ENCODE measurements at regions of chr20 and their contacts with region 1.

Region 1: GRCh38 chr20:815914-816606 is 17.5 kb upstream of the FAM110A start:
- DNase-seq: peak; percentile 61
- H3K4me3 ChIP-seq: no peak overlapping the region
- H3K27ac ChIP-seq: no peak overlapping the region
- H3K4me1 ChIP-seq: no peaks in the 10 kb centered on the region
- H3K27me3 ChIP-seq: peaks cover 8% of the 10 kb centered on the region; the same call in 1 of the 2 replicates

Region 2: DNA sequence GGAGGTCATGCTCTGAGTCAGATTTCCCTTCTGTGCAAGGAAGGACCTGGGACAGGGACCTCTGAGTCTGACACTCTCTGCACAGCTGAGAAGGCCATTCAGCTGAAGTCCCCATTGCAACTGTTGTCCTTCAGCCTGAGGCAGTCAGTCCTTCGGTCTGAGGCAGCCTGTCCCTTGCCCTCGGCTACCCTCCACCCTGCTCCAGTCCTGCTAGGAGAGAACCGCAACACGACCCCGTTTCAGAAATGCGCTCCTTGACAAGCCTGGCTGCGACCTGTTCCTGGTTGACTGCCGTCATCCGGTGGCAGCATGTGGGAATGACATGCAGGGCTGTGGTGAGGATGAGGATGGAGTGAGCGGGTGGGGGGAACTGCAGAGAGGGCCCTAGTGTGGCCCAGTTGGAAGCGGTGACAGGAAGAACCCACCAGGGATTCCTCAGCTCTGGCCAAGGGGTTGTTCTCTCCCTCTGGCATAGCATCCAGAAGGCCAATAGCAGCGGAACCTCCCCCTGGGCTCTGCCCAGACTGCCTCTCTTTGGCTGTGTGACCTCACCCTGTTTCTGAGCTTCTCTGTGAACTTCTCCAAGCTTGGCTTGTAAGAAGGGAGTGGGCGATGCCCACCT is 140.4 kb after region 1 on chr20:
- in situ Hi-C with region 1: loop called (anchors 5 kb)
- DNase-seq: peak; percentile 57
- H3K4me3 ChIP-seq: no peak overlapping the region
- H3K27ac ChIP-seq: no peak overlapping the region
- H3K4me1 ChIP-seq: no peaks in the 10 kb centered on the region
- H3K27me3 ChIP-seq: 0 out of 2 replicates have a peak, but pooled peaks cover 12% of the 10 kb centered on the region

Region 3: GRCh38 chr20:1103751-1104150 is 287.7 kb after region 1 on chr20:
- in situ Hi-C with region 1: loop called (anchors 5 kb)
- DNase-seq: no peak
- H3K4me3 ChIP-seq: no peak overlapping the region
- H3K27ac ChIP-seq: no peak overlapping the region
- H3K4me1 ChIP-seq: no peaks in the 10 kb centered on the region
- H3K27me3 ChIP-seq: no peaks in the 10 kb centered on the region

Region 4: DNA sequence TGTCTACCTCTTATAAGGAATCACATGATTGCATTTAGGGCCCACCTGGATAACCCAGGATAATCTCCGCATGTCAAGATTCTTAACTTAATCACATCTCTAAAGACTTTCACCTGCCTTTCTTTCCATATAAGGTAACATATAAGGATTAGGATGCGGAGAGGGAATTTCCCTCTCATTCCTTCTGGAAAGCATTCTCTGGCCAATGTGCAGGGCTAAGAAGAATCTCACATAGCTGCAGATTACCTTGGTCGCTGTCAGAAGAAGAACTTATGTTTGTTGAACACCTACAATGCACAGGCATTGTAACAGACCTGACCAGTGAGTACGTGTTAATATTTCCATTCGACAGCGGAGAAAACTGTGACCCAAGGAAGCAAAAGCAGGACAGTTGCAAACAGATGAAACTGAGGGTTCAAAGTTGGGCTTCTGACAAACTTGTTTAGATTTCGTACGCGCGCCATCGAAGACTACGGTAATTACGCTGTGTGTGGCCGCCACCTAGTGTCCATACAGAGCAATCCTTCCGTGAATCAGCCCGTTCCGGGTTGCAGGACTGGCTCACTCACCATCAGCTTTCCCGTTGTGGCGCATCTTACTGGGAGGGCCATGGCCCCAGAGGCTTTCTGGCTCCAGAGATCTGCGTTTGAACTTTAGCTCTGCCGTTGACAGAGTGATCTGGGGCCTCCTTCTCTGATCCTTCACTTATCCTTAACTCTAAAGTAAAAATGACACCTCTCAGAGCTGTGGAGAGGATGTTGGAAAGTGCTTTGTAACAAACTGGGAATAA is 396.7 kb after region 1 on chr20:
- in situ Hi-C with region 1: loop called (anchors 25 kb)
- DNase-seq: peak; percentile 92
- H3K4me3 ChIP-seq: peak overlapping the region; percentile 39; the same call in 1 of the 2 replicates
- H3K27ac ChIP-seq: no peak overlapping the region
- H3K4me1 ChIP-seq: no peaks in the 10 kb centered on the region
- H3K27me3 ChIP-seq: peaks cover 17% of the 10 kb centered on the region; the same call in 1 of the 2 replicates

Measured in GM23248 (cell line).